Activated T-helper 1 cell treated with anti-CD3 and anti-CD28 coated beads, Interleukin-12 subunit alpha, Interleukin-12 subunit beta, Interleukin-2, Interleukin-4 antibody, amounts not matched to agents 30 ng/mL and 10 ng/mL and 1 ng/mL, durations not matched to agents 14 hours and 24 hours and 36 hours (primary cell): ENCODE measurements at regions of chr2 and their contacts with region 1.

Region 1: GRCh38 chr2:126776692-126777619 is 121.0 kb downstream of the GYPC start:
- DNase-seq: peak; percentile 72
- H3K4me3 Mint-ChIP-seq: peak overlapping the region; percentile 87
- H3K27ac Mint-ChIP-seq: peak overlapping the region; percentile 18
- H3K4me1 Mint-ChIP-seq: peaks cover 6% of the 10 kb centered on the region
- H3K27me3 Mint-ChIP-seq: peaks cover 10% of the 10 kb centered on the region

Region 2: DNA sequence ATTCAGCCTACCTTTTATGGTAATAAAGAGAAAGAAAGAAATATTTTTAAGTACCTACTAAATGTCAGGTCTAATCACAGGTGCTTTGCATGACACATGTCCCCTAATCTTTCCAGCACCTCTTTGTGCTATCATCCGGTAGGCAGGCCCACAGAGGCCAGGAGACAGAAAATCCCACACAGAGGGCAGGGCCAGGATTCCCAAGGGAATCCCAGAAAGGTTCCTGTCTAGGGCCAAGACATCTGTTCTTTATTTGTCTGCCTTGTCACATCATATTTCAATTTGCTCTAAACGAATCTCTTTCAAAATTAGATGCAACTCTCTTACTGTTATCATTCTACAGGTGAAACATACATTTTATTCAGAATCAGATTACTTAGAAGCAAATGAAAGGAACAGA is 797.1 kb before region 1 on chr2:
- intact Hi-C with region 1: loop called (anchors 5 kb)
- DNase-seq: no peak
- H3K4me3 Mint-ChIP-seq: no peak overlapping the region
- H3K27ac Mint-ChIP-seq: no peak overlapping the region
- H3K4me1 Mint-ChIP-seq: no peaks in the 10 kb centered on the region
- H3K27me3 Mint-ChIP-seq: no peaks in the 10 kb centered on the region

Region 3: DNA sequence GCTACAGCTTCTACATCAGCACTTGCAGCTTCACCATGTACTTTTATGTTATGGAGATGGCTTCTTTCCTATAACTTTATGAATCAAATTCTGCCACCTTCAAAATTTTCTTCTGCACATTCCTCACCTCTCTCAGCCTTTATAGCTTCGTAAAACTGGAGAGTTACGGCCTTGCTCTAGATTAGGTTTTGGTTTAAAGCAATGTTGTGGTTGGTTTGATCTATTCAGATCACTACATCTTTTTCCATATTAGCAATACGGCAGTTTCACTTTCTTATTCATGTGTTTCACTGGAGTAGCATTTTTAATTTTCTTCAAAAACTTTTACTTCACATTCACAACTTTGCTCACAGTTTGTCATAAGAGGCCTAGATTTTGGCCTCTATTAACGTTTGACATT is 363.9 kb before region 1 on chr2:
- intact Hi-C with region 1: loop called (anchors 5 kb)
- DNase-seq: no peak
- H3K4me3 Mint-ChIP-seq: no peak overlapping the region
- H3K27ac Mint-ChIP-seq: peak overlapping the region; percentile 8
- H3K4me1 Mint-ChIP-seq: peaks cover 9% of the 10 kb centered on the region
- H3K27me3 Mint-ChIP-seq: peaks cover 6% of the 10 kb centered on the region

Region 4: GRCh38 chr2:126586317-126586716 is 190.6 kb before region 1 on chr2:
- intact Hi-C with region 1: loop called (anchors 5 kb)
- DNase-seq: no peak
- H3K4me3 Mint-ChIP-seq: no peak overlapping the region
- H3K27ac Mint-ChIP-seq: no peak overlapping the region
- H3K4me1 Mint-ChIP-seq: no peaks in the 10 kb centered on the region
- H3K27me3 Mint-ChIP-seq: no peaks in the 10 kb centered on the region

Region 5: GRCh38 chr2:126723281-126723815 is 53.6 kb before region 1 on chr2:
- intact Hi-C with region 1: no loop called
- DNase-seq: no peak
- H3K4me3 Mint-ChIP-seq: no peak overlapping the region
- H3K27ac Mint-ChIP-seq: no peak overlapping the region
- H3K4me1 Mint-ChIP-seq: no peaks in the 10 kb centered on the region
- H3K27me3 Mint-ChIP-seq: peaks cover 24% of the 10 kb centered on the region